Activated CD4-positive, alpha-beta memory T cell treated with anti-CD3 and anti-CD28 coated beads for 36 hours (primary cell): ENCODE measurements at regions of chr16 and their contacts with region 1.

Region 1: DNA sequence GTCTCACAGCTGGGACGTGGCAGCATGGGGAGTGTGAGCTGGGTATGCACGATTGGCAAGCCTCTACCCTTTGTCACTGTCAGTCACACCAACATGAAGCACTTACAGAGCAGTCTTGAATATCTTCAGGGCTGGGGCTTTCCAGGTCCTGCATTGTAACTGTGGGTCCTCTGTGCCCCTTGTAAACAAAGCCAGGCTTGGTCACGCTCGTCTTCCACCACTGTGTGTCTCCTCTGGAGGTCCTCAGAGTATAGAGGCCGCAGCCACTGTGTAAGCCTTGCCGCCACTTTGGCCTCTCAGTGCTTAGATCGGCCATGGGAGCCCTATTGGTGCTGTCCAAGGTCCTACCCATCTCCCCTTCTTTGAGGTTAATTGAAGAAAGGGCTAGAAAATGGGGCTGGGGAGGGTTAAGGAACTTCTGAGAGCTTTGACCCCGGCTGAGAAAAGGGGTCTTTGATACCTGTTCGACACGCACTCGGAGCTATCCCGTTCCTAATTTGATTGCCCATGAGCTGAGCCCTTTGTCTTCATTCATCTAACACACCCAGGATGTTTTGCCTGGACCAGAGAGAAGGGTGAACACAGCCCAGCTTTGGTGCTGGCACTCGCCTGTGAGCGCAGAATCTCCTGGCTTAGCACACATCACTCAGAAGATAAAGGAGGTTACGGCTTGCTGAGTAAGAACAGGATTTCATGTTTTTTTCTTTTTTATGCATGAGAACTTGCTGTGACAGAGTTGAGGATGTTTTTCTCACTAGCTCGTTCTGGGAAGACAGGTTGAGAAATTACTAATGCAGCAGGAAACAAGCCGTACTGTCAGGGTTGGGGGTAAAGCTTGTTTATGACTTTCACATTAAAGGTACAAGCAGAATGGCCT is 267.9 kb downstream of the CPPED1 start:
- DNase-seq: peak; percentile 81
- H3K4me3 Mint-ChIP-seq: peak overlapping the region; percentile 61
- H3K27ac Mint-ChIP-seq: peak overlapping the region; percentile 96
- H3K4me1 Mint-ChIP-seq: peaks cover 94% of the 10 kb centered on the region
- H3K27me3 Mint-ChIP-seq: no peaks in the 10 kb centered on the region

Region 2: DNA sequence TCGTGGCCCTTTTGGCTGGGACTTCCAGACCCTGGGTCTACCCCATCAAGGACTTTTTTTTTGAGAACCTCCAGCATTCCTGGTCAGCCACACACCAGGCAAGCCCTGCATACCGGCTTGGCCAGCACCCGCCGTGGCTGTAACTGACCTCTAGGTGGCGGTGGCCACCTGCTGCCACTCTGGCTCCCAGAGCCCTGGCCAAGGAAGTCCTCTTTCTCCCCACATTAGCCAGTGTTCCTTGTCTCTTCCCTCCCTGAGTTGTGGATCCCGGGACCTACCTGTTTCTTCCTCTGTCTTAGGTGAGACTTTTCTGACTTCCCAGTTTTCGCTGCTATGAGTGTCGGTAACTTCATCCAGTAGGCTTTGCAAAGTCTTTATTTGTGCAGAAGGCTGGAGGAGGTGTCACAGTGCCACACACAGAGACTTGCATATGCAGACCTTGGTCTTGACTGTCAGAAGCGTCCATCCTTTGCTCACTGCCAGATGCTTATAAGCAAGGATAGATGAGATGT is 80.4 kb before region 1 on chr16:
- CTCF ChIA-PET with region 1: interaction called, 4 read pairs
- POLR2A ChIA-PET with region 1: interaction called, 4 read pairs
- intact Hi-C with region 1: loop called (anchors 2 kb)
- DNase-seq: peak; percentile 67
- H3K4me3 Mint-ChIP-seq: no peak overlapping the region
- H3K27ac Mint-ChIP-seq: no peak overlapping the region
- H3K4me1 Mint-ChIP-seq: peaks cover 16% of the 10 kb centered on the region
- H3K27me3 Mint-ChIP-seq: no peaks in the 10 kb centered on the region

Region 3: GRCh38 chr16:12546918-12547607 is 11.3 kb after region 1 on chr16:
- CTCF ChIA-PET with region 1: interaction called, 5 read pairs
- POLR2A ChIA-PET with region 1: interaction called, 19 read pairs
- intact Hi-C with region 1: loop called (anchors 1 kb)
- DNase-seq: peak; percentile 15
- H3K4me3 Mint-ChIP-seq: peak overlapping the region; percentile 47
- H3K27ac Mint-ChIP-seq: peak overlapping the region; percentile 71
- H3K4me1 Mint-ChIP-seq: peaks cover 53% of the 10 kb centered on the region
- H3K27me3 Mint-ChIP-seq: no peaks in the 10 kb centered on the region

Region 4: DNA sequence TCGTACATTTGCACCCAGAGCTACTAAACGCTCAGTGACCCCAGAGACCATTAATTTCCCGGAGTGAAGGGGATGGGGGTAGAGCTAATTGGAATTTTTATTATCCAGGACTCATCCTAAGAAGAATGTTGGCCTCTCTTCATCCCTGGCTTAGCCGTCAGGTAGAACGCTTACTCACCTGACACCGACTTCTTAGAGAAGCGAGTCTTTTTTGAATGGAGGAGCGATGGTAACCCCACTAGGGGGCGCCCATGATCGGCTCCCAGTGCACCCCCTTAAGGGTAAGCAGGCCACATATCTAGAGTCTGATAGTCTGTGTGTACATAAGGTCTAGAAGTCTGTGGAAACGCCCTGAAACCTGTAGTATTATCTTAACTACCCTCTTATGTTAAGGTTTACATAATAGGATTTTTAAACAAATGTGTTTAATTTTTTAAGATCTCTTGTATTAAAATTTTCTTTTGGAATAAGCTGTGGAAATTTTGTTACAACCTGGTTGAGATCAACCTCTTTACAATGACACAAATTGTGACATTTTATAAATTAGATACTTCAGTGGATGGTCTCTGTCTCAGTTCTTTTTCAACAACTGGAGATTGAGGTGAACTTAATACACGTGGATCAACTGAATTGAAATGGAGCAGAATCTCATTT is 38.1 kb after region 1 on chr16:
- CTCF ChIA-PET with region 1: interaction called, 5 read pairs
- POLR2A ChIA-PET with region 1: no interaction called
- intact Hi-C with region 1: loop called (anchors 2 kb)
- DNase-seq: peak; percentile 84
- H3K4me3 Mint-ChIP-seq: no peak overlapping the region
- H3K27ac Mint-ChIP-seq: no peak overlapping the region
- H3K4me1 Mint-ChIP-seq: peaks cover 3% of the 10 kb centered on the region
- H3K27me3 Mint-ChIP-seq: peaks cover 2% of the 10 kb centered on the region

Region 5: GRCh38 chr16:12646490-12647274 is 110.9 kb after region 1 on chr16:
- CTCF ChIA-PET with region 1: no interaction called
- POLR2A ChIA-PET with region 1: no interaction called
- intact Hi-C with region 1: loop called (anchors 2 kb)
- DNase-seq: peak; percentile 44
- H3K4me3 Mint-ChIP-seq: peak overlapping the region; percentile 42
- H3K27ac Mint-ChIP-seq: peak overlapping the region; percentile 75
- H3K4me1 Mint-ChIP-seq: peaks cover 16% of the 10 kb centered on the region
- H3K27me3 Mint-ChIP-seq: peaks cover 1% of the 10 kb centered on the region

Region 6: GRCh38 chr16:12803203-12804097 is 267.7 kb after region 1 on chr16 and contains the start of gene CPPED1:
- CTCF ChIA-PET with region 1: no interaction called
- POLR2A ChIA-PET with region 1: interaction called, 8 read pairs
- intact Hi-C with region 1: loop called (anchors 1 kb)
- DNase-seq: peak; percentile 94
- H3K4me3 Mint-ChIP-seq: peak within 1 kb of the TSS; percentile 95
- H3K27ac Mint-ChIP-seq: peak within 1 kb of the TSS; percentile 91
- H3K4me1 Mint-ChIP-seq: peaks cover 30% of the 10 kb centered on the region
- H3K27me3 Mint-ChIP-seq: peaks cover 2% of the 10 kb centered on the region
- total RNA-seq, gene CPPED1: 11.0 to 11.5 TPM